ENCODE measurements at regions of chr2 and their contacts with region 1.

Region 1: GRCh38 chr2:191617575-191617974 is 60.4 kb upstream of the NABP1 start:
- DNase-seq: peak; percentile 61
- ATAC-seq: peak; percentile 80
- H3K4me3 Mint-ChIP-seq: peak overlapping the region; percentile 47
- H3K27ac Mint-ChIP-seq: peak overlapping the region; percentile 99
- H3K4me1 Mint-ChIP-seq: peaks cover 52% of the 10 kb centered on the region
- H3K27me3 Mint-ChIP-seq: no peaks in the 10 kb centered on the region

Region 2: DNA sequence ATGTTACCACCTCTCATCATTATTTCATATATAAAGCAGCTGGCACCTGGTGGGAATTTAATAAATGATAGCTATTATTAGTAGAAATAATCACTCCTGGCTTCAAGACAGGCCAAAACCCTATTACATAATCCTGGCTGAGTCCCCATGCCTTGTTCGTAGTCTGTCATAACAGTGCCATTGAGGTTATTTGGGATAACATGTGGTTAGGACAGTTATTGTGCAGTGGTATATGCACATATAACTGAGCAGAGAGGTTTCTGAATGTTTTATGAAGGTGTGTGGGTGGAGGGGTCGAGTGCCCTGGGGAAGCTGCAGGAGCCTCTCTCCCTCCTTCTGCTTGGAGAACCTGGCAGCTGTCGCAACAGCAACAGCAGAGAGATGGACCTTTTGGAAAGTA is 102.0 kb before region 1 on chr2:
- CTCF ChIA-PET with region 1: no interaction called
- POLR2A ChIA-PET with region 1: no interaction called
- intact Hi-C with region 1: no loop called
- DNase-seq: no peak
- ATAC-seq: no peak
- H3K4me3 Mint-ChIP-seq: no peak overlapping the region
- H3K27ac Mint-ChIP-seq: no peak overlapping the region
- H3K4me1 Mint-ChIP-seq: no peaks in the 10 kb centered on the region
- H3K27me3 Mint-ChIP-seq: peaks cover 6% of the 10 kb centered on the region

Region 3: GRCh38 chr2:191573216-191573615 is 44.4 kb before region 1 on chr2:
- CTCF ChIA-PET with region 1: interaction called, 4 read pairs
- POLR2A ChIA-PET with region 1: no interaction called
- intact Hi-C with region 1: loop called (anchors 1 to 5 kb)
- DNase-seq: no peak
- ATAC-seq: peak; percentile 52
- H3K4me3 Mint-ChIP-seq: no peak overlapping the region
- H3K27ac Mint-ChIP-seq: peak overlapping the region; percentile 85
- H3K4me1 Mint-ChIP-seq: peaks cover 49% of the 10 kb centered on the region
- H3K27me3 Mint-ChIP-seq: no peaks in the 10 kb centered on the region

Measured in activated CD4-positive, alpha-beta T cell treated with anti-CD3 and anti-CD28 coated beads for 36 hours (primary cell).